T-cell (primary cell): ENCODE measurements at regions of chr12 and their contacts with region 1.

Region 1: DNA sequence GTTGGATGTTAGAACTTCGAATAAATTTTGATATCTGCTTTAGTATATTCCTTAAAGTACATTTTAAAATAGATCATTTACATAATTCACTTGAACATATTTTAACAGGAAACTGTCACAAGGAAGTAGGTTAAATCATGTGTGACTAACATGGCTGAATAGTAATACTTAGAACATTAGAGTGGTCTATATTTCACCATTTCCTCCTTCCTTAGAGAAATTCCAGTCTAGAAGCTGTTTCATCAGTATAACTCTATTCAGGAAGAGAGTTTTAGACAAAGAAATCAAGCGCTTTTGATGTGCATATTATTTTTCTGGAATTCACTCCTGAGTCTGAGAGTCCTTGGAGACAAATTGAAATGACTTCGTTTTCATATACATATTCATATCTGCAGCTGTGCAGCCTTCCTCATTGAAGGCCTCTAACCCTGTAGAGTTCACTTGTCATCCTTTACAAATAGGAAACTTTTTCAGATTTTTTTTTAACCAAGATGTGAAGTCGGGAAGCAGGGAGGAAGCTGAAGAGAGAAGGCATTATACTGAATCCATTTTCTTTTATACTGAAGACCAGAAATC is 28.4 kb downstream of the IRAK3 start:
- DNase-seq: no peak
- ATAC-seq: no peak
- H3K4me3 ChIP-seq: no peak overlapping the region
- H3K4me3 Mint-ChIP-seq: no peak overlapping the region
- H3K27ac ChIP-seq: no peak overlapping the region
- H3K27ac Mint-ChIP-seq: no peak overlapping the region
- H3K4me1 ChIP-seq: no peaks in the 10 kb centered on the region
- H3K4me1 Mint-ChIP-seq: peaks cover 0 to 4% (median 2%) of the 10 kb centered on the region in 3 donors
- H3K27me3 ChIP-seq: peaks cover 0 to 2% of the 10 kb centered on the region in 2 experiments
- H3K27me3 Mint-ChIP-seq: peaks cover 8 to 12% of the 10 kb centered on the region in 2 donors

Region 2: GRCh38 chr12:66130277-66131066 is 87.0 kb before region 1 on chr12 and contains the start of gene LLPH:
- CTCF ChIA-PET with region 1: no interaction called
- POLR2A ChIA-PET with region 1: no interaction called
- DNase-seq: peak; percentile 75 to 95 (median 87)
- ATAC-seq: peak; percentile 96 to 98 (median 96)
- H3K4me3 ChIP-seq: peak within 1 kb of the TSS; percentile 80 to 98
- H3K4me3 Mint-ChIP-seq: peak within 1 kb of the TSS; percentile 84 to 99 (median 98)
- H3K27ac ChIP-seq: peak within 1 kb of the TSS; percentile 84
- H3K27ac Mint-ChIP-seq: peak within 1 kb of the TSS; percentile 96
- H3K4me1 ChIP-seq: peaks cover 14 to 17% of the 10 kb centered on the region in 2 experiments
- H3K4me1 Mint-ChIP-seq: peaks cover 62 to 68% (median 62%) of the 10 kb centered on the region in 3 donors
- H3K27me3 ChIP-seq: no peaks in the 10 kb centered on the region
- H3K27me3 Mint-ChIP-seq: no peaks in the 10 kb centered on the region
- total RNA-seq, gene LLPH: 16.6 to 24.3 (median 22.3) TPM

Region 3: DNA sequence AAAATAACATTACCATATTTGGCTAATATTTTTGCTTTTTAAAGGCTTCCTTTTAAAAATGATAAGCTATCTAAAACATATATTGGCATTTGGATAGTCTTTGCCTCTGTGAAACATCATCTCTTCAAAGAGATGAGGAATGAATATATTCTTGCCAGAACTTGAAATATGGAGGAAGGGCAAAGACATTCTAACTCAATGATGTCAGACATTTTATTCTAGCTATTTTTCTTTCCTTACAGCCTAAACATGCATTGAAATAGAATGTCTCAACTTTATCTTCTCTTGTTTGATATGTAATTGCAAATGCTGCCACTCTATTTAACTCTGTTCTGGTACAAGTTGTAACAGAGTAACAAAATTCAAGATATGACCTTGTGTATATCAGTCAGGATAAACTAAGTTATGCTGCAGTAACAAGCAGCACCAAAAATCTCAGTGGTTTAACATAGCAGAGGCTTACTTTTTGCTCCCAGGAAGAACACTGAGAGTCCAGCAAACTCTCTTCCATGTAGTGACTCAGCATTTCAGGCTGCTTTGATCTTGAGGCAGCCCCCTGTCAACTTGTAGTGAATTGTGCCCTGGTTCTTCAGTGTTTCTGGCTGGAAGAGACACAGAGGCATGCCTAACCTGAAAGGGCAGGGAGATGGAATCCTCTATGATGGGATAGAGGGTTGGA is 17.5 kb before region 1 on chr12:
- CTCF ChIA-PET with region 1: interaction called, 3 to 6 read pairs
- POLR2A ChIA-PET with region 1: interaction called in 1 of 2 experiments, 10 read pairs
- DNase-seq: no peak
- ATAC-seq: no peak
- H3K4me3 ChIP-seq: no peak overlapping the region
- H3K4me3 Mint-ChIP-seq: no peak overlapping the region
- H3K27ac ChIP-seq: no peak overlapping the region
- H3K27ac Mint-ChIP-seq: no peak overlapping the region
- H3K4me1 ChIP-seq: no peaks in the 10 kb centered on the region
- H3K4me1 Mint-ChIP-seq: peaks cover 7 to 13% (median 8%) of the 10 kb centered on the region in 3 donors
- H3K27me3 ChIP-seq: peaks cover 0 to 15% of the 10 kb centered on the region in 2 experiments
- H3K27me3 Mint-ChIP-seq: peaks cover 17% of the 10 kb centered on the region in 2 donors